ENCODE measurements at regions of chr4 and their contacts with region 1.

Region 1: GRCh38 chr4:25970226-25970675 is 56.2 kb downstream of the SMIM20 start:
- DNase-seq: no peak
- H3K4me3 ChIP-seq: no peak overlapping the region
- H3K27ac ChIP-seq: no peak overlapping the region
- H3K27me3 ChIP-seq: peaks cover 3% of the 10 kb centered on the region
- CTCF ChIP-seq: no peak

Region 2: GRCh38 chr4:25890571-25891485 is 79.4 kb before region 1 on chr4:
- CTCF ChIA-PET with region 1: no interaction called
- POLR2A ChIA-PET with region 1: no interaction called
- DNase-seq: no peak
- H3K4me3 ChIP-seq: no peak overlapping the region
- H3K27ac ChIP-seq: no peak overlapping the region
- H3K27me3 ChIP-seq: no peaks in the 10 kb centered on the region
- CTCF ChIP-seq: 0 out of 2 replicates have a peak, but pooled peaks have one; percentile 3

Region 3: DNA sequence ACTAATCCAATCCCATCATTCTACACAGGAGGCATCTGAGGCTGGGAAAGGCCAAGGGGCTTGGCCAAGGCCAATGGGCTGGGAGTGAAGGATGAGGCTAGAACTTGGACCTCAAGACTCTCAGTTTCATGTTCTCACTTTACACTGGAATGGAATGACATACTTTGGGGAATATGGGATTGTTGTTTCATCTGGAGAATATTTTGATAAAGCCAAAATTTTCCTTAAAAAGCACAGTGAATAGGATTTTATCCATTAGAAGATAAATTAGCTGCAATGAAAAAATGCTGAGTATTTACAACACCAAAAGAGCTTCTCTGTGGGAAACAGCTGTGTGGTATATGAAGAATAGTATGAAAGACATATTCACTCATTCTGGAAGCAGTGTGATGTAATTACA is 26.9 kb before region 1 on chr4:
- CTCF ChIA-PET with region 1: no interaction called
- POLR2A ChIA-PET with region 1: no interaction called
- DNase-seq: no peak
- H3K4me3 ChIP-seq: no peak overlapping the region
- H3K27ac ChIP-seq: no peak overlapping the region
- H3K27me3 ChIP-seq: peaks cover 6% of the 10 kb centered on the region
- CTCF ChIP-seq: no peak

Region 4: GRCh38 chr4:25953740-25954139 is 16.5 kb before region 1 on chr4:
- CTCF ChIA-PET with region 1: no interaction called
- POLR2A ChIA-PET with region 1: no interaction called
- DNase-seq: peak; percentile 7
- H3K4me3 ChIP-seq: no peak overlapping the region
- H3K27ac ChIP-seq: no peak overlapping the region
- H3K27me3 ChIP-seq: peaks cover 16% of the 10 kb centered on the region
- CTCF ChIP-seq: 0 out of 2 replicates have a peak, but pooled peaks have one; percentile 7

Region 5: GRCh38 chr4:25986807-25987206 is 16.6 kb after region 1 on chr4:
- CTCF ChIA-PET with region 1: interaction called, 26 read pairs
- POLR2A ChIA-PET with region 1: no interaction called
- DNase-seq: no peak
- H3K4me3 ChIP-seq: no peak overlapping the region
- H3K27ac ChIP-seq: no peak overlapping the region
- H3K27me3 ChIP-seq: peaks cover 3% of the 10 kb centered on the region
- CTCF ChIP-seq: no peak

Region 6: GRCh38 chr4:26048378-26048882 is 78.2 kb after region 1 on chr4:
- CTCF ChIA-PET with region 1: no interaction called
- POLR2A ChIA-PET with region 1: no interaction called
- DNase-seq: peak; percentile 74
- H3K4me3 ChIP-seq: no peak overlapping the region
- H3K27ac ChIP-seq: peak overlapping the region; percentile 97
- H3K27me3 ChIP-seq: no peaks in the 10 kb centered on the region
- CTCF ChIP-seq: no peak